ENCODE measurements at regions of chr4 and their contacts with region 1.

Region 1: GRCh38 chr4:174681723-174682300 is 147.2 kb downstream of the GLRA3 start:
- DNase-seq: no peak
- H3K4me3 ChIP-seq: no peak overlapping the region
- H3K27ac ChIP-seq: no peak overlapping the region
- H3K4me1 ChIP-seq: no peaks in the 10 kb centered on the region
- H3K27me3 ChIP-seq: no peaks in the 10 kb centered on the region
- CTCF ChIP-seq: no peak
- EP300 ChIP-seq: no peak
- POLR2A ChIP-seq: no peak

Region 2: DNA sequence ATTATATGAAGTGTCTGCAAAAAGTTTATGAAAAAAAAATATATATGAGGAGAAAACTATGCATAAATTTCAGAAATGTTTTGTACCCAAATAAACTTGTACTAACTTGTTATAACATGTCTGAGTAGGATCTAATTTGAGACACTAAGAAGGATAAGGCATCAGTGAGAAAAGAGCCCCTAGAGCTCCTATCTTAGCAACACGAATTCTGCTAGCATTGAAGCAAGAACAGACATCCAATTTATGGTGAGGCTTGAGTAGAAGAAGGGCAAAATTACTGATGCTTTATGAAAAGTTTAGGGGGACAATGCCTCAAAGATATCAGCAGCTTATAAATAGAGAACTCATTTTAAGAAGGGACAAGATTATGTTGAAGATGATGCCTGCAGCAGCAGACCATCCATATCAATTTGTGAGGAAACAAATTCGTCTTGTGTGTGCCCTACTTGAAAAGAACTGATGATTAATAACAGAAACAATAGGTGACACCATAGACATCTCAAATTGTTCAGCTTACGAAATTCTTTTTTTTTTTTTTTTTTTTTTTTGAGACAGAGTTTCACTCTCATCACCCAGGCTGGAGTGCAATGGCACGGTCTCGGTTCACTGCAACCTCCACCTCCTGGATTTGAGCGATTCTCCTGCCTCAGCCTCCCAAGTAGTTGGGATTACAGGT is 200.6 kb after region 1 on chr4:
- in situ Hi-C with region 1: no loop called
- intact Hi-C with region 1: no loop called
- DNase-seq: no peak
- H3K4me3 ChIP-seq: no peak overlapping the region
- H3K27ac ChIP-seq: no peak overlapping the region
- H3K4me1 ChIP-seq: no peaks in the 10 kb centered on the region
- H3K27me3 ChIP-seq: no peaks in the 10 kb centered on the region
- CTCF ChIP-seq: no peak
- EP300 ChIP-seq: no peak
- POLR2A ChIP-seq: no peak

Region 3: GRCh38 chr4:175770555-175770954 is 1088.7 kb after region 1 on chr4:
- in situ Hi-C with region 1: no loop called
- intact Hi-C with region 1: loop called (anchors 5 kb)
- DNase-seq: no peak
- H3K4me3 ChIP-seq: no peak overlapping the region
- H3K27ac ChIP-seq: no peak overlapping the region
- H3K4me1 ChIP-seq: no peaks in the 10 kb centered on the region
- H3K27me3 ChIP-seq: no peaks in the 10 kb centered on the region
- CTCF ChIP-seq: no peak
- EP300 ChIP-seq: no peak
- POLR2A ChIP-seq: no peak

Measured in transverse colon (tissue), 4 donors.